Endothelial cell of umbilical vein (primary cell): ENCODE measurements at regions of chr15 and their contacts with region 1.

Region 1: GRCh38 chr15:44023176-44023575 is 171.9 kb downstream of the FRMD5 start:
- DNase-seq: peak; percentile 68
- H3K4me3 ChIP-seq: no peak overlapping the region
- H3K27ac ChIP-seq: peak overlapping the region; percentile 39
- H3K4me1 ChIP-seq: peaks cover 35% of the 10 kb centered on the region
- H3K27me3 ChIP-seq: no peaks in the 10 kb centered on the region
- CTCF ChIP-seq: peak; percentile 3 to 25
- POLR2A ChIP-seq: no peak

Region 2: DNA sequence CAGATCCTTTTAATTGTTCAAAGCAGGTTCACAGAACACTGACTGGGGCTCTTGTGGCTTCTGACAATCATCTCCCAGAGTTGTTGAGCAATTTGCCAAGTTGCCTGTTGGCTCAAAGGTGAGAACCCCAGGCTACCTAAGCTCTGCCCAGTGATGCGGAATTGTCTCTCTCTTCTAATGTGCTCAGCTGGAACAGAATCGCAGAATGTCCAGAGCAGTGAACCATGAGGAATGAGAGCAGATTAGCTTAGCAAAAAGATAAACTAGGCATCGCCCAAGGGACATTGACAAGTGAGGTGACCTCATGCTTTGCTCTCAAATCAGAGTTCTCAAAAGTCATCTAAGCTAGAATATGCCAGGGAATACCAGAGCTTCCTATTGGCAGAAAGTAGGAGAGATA is 48.3 kb before region 1 on chr15:
- CTCF ChIA-PET with region 1: no interaction called
- POLR2A ChIA-PET with region 1: no interaction called
- dilution Hi-C with region 1: no loop called
- intact Hi-C with region 1: no loop called
- DNase-seq: no peak
- H3K4me3 ChIP-seq: no peak overlapping the region
- H3K27ac ChIP-seq: no peak overlapping the region
- H3K4me1 ChIP-seq: peaks cover 5% of the 10 kb centered on the region
- H3K27me3 ChIP-seq: no peaks in the 10 kb centered on the region
- CTCF ChIP-seq: no peak
- POLR2A ChIP-seq: no peak

Region 3: DNA sequence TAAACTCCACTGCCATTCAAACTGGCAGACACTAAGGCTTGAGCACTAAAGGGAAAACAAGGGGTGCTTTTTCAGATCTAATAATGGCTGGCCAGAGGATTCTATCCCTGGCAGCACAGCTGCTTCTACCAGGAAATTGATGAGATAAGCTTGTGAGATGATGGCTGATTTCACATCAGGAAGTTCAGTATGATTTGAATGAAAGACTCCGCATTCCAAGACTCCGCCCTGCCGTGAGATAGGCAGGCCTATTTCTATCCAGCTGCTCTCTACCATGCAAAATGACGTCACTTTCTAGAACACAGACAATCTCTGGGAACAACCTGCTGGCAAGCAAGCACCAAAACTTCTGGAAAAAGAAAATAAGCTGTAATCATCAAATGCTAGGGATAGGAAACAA is 24.6 kb before region 1 on chr15:
- CTCF ChIA-PET with region 1: interaction called, 15 read pairs
- POLR2A ChIA-PET with region 1: interaction called, 10 read pairs
- dilution Hi-C with region 1: no loop called
- intact Hi-C with region 1: loop called (anchors 1 kb)
- DNase-seq: peak; percentile 93
- H3K4me3 ChIP-seq: peak overlapping the region in 1 of 3 experiments; percentile 37
- H3K27ac ChIP-seq: peak overlapping the region; percentile 71
- H3K4me1 ChIP-seq: peaks cover 23% of the 10 kb centered on the region
- H3K27me3 ChIP-seq: no peaks in the 10 kb centered on the region
- CTCF ChIP-seq: no peak
- POLR2A ChIP-seq: no peak

Region 4: GRCh38 chr15:44009056-44009455 is 14.1 kb before region 1 on chr15:
- CTCF ChIA-PET with region 1: interaction called, 26 read pairs
- POLR2A ChIA-PET with region 1: no interaction called
- dilution Hi-C with region 1: no loop called
- intact Hi-C with region 1: no loop called
- DNase-seq: peak; percentile 40
- H3K4me3 ChIP-seq: no peak overlapping the region
- H3K27ac ChIP-seq: no peak overlapping the region
- H3K4me1 ChIP-seq: peaks cover 8% of the 10 kb centered on the region
- H3K27me3 ChIP-seq: no peaks in the 10 kb centered on the region
- CTCF ChIP-seq: no peak
- POLR2A ChIP-seq: no peak

Region 5: GRCh38 chr15:44045217-44045616 is 22.0 kb after region 1 on chr15:
- CTCF ChIA-PET with region 1: interaction called, 11 read pairs
- POLR2A ChIA-PET with region 1: no interaction called
- dilution Hi-C with region 1: no loop called
- intact Hi-C with region 1: no loop called
- DNase-seq: peak; percentile 81
- H3K4me3 ChIP-seq: no peak overlapping the region
- H3K27ac ChIP-seq: peak overlapping the region; percentile 57
- H3K4me1 ChIP-seq: peaks cover 14% of the 10 kb centered on the region
- H3K27me3 ChIP-seq: no peaks in the 10 kb centered on the region
- CTCF ChIP-seq: no peak
- POLR2A ChIP-seq: no peak